Right ventricle myocardium superior (tissue), 1 donor: ENCODE measurements at regions of chr22 and their contacts with region 1.

Region 1: GRCh38 chr22:25172153-25172552 is 27.5 kb upstream of the CRYBB3 start:
- DNase-seq: no peak
- ATAC-seq: peak; percentile 71

Region 2: GRCh38 chr22:25110846-25111578 is 61.1 kb before region 1 on chr22:
- intact Hi-C with region 1: loop called (anchors 5 kb)
- DNase-seq: peak; percentile 57
- ATAC-seq: peak; percentile 88